ENCODE measurements at regions of chr3 and their contacts with region 1.

Region 1: GRCh38 chr3:66803206-66803605 is 194.9 kb upstream of the KBTBD8 start:
- DNase-seq: no peak
- ATAC-seq: peak; percentile 89
- H3K4me3 Mint-ChIP-seq: no peak overlapping the region
- H3K27ac Mint-ChIP-seq: no peak overlapping the region
- H3K4me1 Mint-ChIP-seq: peaks cover 20% of the 10 kb centered on the region
- H3K27me3 Mint-ChIP-seq: peaks cover 2% of the 10 kb centered on the region; the same call in 1 of the 2 replicates
- CTCF ChIP-seq: peak; percentile 38

Region 2: DNA sequence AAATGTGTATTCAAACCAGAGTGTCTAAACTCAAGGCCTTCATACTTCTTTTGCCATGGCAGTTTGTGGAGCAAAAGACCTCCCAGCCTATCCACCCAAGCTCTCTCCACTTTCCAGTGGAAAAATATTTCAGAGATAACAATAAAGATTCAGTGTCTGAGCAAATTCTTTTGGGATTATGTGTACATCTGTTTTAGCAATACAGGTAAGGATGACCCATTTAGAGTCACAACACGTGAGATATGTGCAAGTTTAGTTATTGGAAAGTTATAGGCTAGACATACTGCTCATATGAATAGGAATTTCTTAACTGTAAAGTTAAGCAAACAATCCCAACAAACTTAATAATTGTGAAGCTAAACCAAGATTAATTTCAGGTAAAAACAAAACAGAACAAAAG is 127.8 kb before region 1 on chr3:
- CTCF ChIA-PET with region 1: no interaction called
- POLR2A ChIA-PET with region 1: no interaction called
- DNase-seq: no peak
- ATAC-seq: no peak
- H3K4me3 Mint-ChIP-seq: no peak overlapping the region
- H3K27ac Mint-ChIP-seq: no peak overlapping the region
- H3K4me1 Mint-ChIP-seq: no peaks in the 10 kb centered on the region
- H3K27me3 Mint-ChIP-seq: no peaks in the 10 kb centered on the region; the same call in 1 of the 2 replicates
- CTCF ChIP-seq: no peak

Region 3: DNA sequence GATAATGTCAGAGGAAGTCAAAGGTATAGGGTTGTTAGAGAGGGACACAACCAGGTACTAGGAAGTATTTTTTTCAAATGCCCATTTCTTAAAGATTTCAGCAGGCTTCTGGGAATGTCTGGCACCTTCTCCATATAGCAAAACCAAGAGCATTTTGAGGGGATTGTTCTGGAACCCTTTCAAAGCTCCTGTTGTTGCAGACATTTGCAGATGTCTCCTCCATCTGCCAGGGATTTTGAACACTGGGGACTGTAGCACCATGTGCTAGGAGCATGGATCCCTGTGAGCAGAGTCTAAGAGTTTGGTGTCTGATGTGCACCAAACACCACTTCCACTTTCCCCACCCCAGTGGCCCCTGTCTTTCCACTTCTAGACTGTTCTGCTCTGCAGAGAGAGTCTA is 11.1 kb before region 1 on chr3:
- CTCF ChIA-PET with region 1: interaction called, 16 read pairs
- POLR2A ChIA-PET with region 1: no interaction called
- DNase-seq: no peak
- ATAC-seq: no peak
- H3K4me3 Mint-ChIP-seq: no peak overlapping the region
- H3K27ac Mint-ChIP-seq: no peak overlapping the region
- H3K4me1 Mint-ChIP-seq: peaks cover 37% of the 10 kb centered on the region
- H3K27me3 Mint-ChIP-seq: peaks cover 12% of the 10 kb centered on the region
- CTCF ChIP-seq: no peak

Region 4: GRCh38 chr3:66816090-66816761 is 13.0 kb after region 1 on chr3:
- CTCF ChIA-PET with region 1: interaction called, 25 read pairs
- POLR2A ChIA-PET with region 1: no interaction called
- DNase-seq: no peak
- ATAC-seq: peak; percentile 86
- H3K4me3 Mint-ChIP-seq: no peak overlapping the region
- H3K27ac Mint-ChIP-seq: no peak overlapping the region
- H3K4me1 Mint-ChIP-seq: peaks cover 47% of the 10 kb centered on the region
- H3K27me3 Mint-ChIP-seq: no peaks in the 10 kb centered on the region
- CTCF ChIP-seq: peak; percentile 27; the same call in 1 of the 2 replicates